GM12878 (cell line): ENCODE measurements at regions of chr11 and their contacts with region 1.

Region 1: GRCh38 chr11:118699506-118700220 is 20.2 kb upstream of the TREH start:
- DNase-seq: no peak
- ATAC-seq: no peak
- H3K4me3 ChIP-seq: no peak overlapping the region
- H3K27ac ChIP-seq: no peak overlapping the region
- H3K4me1 ChIP-seq: peaks cover 32% of the 10 kb centered on the region
- H3K27me3 ChIP-seq: no peaks in the 10 kb centered on the region
- CTCF ChIP-seq: no peak
- EP300 ChIP-seq: no peak
- POLR2A ChIP-seq: no peak
- RAD21 ChIP-seq: no peak

Region 2: DNA sequence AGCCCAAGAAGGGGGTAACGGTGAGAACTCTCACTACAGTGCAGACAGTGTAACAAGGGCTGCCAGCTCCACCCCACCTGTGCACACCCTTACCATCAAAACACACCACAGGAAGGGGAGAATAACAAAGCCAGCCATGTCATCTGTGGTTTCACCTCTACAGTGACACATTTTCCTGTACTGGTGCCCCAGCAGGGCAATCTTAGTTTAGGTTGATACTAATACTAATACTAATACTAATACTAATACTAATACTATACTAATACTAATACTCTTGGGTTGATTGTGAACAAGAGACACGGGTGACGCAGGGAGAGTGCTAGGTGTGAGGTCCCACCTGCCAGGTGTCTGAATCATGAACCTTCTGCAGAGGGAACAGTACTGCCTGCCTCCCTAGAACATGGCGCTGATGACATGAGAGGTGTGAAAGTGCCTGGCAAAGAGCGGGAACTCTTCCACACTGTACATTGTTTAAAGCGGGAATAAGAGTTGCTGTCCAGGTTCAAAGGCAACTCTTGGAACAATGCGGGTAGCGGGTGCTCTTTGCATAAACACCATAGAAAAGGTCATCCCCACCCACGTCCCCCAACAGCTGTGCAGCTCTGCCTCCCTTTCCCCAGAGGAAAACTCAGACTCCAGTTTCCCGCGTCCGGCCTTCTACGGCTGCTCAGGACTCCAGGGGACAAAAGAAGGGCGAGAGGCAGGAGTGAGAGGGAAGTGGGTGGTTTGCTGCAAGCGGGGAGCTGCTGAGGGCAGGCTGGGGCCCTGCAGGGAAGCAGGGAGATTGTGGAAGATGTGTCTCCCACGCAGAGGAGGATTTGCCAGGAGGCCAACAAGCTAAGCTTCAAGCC is 647.8 kb before region 1 on chr11:
- CTCF ChIA-PET with region 1: no interaction called
- POLR2A ChIA-PET with region 1: no interaction called
- RAD21 ChIA-PET with region 1: no interaction called
- SMC1A ChIA-PET with region 1: no interaction called
- in situ Hi-C with region 1: no loop called
- intact Hi-C with region 1: no loop called
- DNase-seq: peak; percentile 23
- ATAC-seq: peak; percentile 81
- H3K4me3 ChIP-seq: no peak overlapping the region
- H3K27ac ChIP-seq: no peak overlapping the region
- H3K4me1 ChIP-seq: peaks cover 18% of the 10 kb centered on the region
- H3K27me3 ChIP-seq: no peaks in the 10 kb centered on the region
- CTCF ChIP-seq: no peak
- EP300 ChIP-seq: peak; percentile 14 to 42; a peak in 2 of 4 replicates
- POLR2A ChIP-seq: no peak
- RAD21 ChIP-seq: no peak

Region 3: DNA sequence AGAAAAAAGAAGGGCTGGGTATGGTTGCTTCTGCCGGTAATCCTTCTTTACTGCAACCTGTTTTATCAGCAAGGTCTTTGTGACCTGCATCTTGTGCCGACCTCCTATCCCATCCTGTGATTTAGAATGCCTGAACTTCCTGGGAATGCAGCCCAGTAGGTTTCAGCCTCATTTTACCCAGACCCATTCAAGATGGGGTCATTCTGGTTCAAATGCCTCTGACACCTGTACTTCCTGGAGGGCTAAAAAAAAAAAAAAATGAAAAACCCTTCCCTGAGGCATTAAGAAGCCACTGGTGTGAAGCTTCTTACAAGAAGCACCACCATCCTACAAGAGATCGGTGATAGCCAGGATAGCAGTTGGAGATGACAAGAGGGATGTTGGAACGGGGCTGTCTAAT is 34.4 kb after region 1 on chr11:
- CTCF ChIA-PET with region 1: no interaction called
- POLR2A ChIA-PET with region 1: no interaction called
- RAD21 ChIA-PET with region 1: interaction called, 3 read pairs
- SMC1A ChIA-PET with region 1: no interaction called
- in situ Hi-C with region 1: no loop called
- intact Hi-C with region 1: loop called (anchors 5 kb)
- DNase-seq: no peak
- ATAC-seq: no peak
- H3K4me3 ChIP-seq: no peak overlapping the region
- H3K27ac ChIP-seq: no peak overlapping the region
- H3K4me1 ChIP-seq: no peaks in the 10 kb centered on the region
- H3K27me3 ChIP-seq: no peaks in the 10 kb centered on the region
- CTCF ChIP-seq: no peak
- EP300 ChIP-seq: no peak
- POLR2A ChIP-seq: no peak
- RAD21 ChIP-seq: no peak